ENCODE measurements at regions of chr4 and their contacts with region 1.

Region 1: GRCh38 chr4:41882625-41883347 is 52.4 kb upstream of the TMEM33 start:
- DNase-seq: peak; percentile 67
- ATAC-seq: peak; percentile 89

Region 2: DNA sequence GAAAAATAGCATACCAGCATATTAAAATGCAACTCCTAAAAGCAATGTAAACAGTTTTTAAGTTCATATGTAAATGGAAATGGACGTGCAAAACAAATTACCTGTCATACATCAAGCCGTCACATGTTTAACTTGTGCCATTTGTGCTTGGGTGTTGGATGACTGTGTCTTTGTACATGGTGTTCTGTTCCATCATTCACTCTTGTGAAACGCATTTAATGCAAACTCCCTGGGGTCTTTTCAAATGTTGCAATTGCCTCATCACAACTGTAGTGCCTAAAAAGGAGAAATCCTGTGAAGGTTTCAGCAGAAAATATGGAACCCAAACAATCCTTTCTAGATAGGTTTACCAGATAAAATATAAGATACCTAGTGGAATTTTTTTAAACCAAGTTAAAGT is 186.7 kb before region 1 on chr4:
- intact Hi-C with region 1: loop called (anchors 5 kb)
- DNase-seq: no peak
- ATAC-seq: no peak

Region 3: DNA sequence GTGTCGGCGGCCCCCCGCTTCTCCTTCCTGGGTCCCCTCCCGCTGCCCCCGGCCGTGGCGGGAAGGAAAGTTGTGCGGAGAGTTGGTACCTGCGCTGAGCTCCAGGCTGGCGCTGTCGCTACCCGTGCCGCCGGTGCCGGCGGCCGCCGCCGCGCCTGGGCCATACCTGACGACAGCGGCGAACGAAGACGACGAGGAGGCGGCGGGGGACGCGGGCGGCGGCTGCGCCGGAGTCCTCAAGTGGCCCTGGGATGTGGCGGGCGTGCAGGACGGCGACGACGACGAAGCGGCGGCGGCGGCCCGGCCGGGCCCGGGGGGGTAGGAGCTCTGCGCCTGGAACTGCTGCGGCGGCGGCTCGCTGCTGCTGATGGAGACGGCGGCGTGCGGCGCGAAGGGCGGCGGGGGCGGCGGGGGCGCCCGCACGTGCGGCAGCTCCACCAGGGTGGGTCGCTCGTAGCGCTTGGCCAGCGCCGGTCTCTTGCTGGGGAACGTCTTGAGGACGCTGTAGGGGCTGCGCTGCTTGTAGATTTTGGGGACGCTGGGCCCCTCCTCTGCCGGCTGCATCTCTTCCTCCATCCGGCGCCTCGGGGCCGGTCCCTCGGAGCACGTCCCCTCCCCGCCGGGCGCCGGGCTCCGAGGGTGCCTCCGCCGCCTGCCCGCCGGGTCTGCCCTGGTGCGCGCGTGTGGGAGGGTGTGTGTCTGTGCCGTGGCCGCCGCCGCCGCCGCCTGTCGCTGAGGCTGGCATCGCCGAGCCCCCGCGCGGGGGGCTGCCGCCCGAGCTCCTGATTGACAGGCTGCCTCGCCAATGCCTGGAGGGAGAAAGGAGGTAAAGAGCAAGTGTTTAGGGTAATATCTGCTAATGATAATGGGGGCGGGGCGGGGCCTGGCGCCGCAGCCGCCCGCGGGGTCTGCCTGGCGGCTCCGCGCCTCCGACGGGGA is 269.1 kb after region 1 on chr4:
- intact Hi-C with region 1: no loop called
- DNase-seq: no peak
- ATAC-seq: no peak

Measured in left ventricle myocardium superior (tissue), 1 donor.